ENCODE measurements at regions of chr22 and their contacts with region 1.

Region 1: DNA sequence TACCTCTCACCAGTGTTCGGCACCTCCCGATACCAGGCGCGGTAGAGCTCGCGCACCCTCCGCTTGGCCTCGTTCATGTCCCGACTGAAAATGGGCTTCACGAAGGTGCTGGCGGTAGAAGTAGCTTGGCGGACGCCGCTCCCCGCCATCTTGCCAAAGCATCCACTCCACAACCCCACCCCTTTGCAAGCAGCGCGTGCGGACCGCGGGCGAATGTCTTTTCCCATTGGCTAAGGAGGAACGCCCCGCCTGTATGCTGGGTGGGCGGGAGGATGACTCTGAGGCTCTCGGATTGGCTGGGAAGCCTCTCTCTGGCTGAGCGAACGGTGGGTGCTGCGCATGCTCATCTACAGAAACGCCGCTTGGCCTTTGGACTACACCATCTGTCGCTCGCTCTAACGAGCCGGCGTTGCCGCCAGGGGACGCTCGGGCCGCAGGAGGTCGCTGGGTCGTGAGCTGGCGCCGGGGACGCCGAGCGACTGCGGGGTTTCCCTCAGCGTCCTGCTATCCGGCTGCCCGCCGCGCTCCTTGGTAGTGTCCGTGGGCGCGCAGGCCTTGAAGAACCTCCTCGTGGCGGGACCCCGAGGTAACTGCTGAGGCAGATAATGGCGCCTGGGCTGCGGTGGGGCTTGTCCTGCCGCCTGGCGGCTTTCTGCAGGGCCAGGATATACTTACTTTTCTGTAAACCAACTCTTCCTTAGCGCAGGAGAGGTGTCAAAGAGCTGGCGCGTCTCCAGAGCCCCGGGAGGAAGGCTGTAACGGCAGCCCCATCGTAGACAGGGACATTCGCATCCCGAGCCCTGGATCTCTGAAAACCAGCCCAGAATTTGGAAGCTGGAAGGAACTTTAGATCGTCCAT is at the start of gene NDUFA6:
- DNase-seq: peak; percentile 99
- H3K4me3 Mint-ChIP-seq: peak within 1 kb of the TSS; percentile 94
- H3K27ac Mint-ChIP-seq: peak within 1 kb of the TSS; percentile 100
- H3K4me1 Mint-ChIP-seq: peaks cover 27% of the 10 kb centered on the region
- H3K27me3 Mint-ChIP-seq: no peaks in the 10 kb centered on the region
- total RNA-seq, gene NDUFA6: 77.7 and 87.8 TPM in 2 replicates

Region 2: GRCh38 chr22:42079319-42080251 is 11.2 kb before region 1 on chr22 and contains the start of gene SMDT1:
- intact Hi-C with region 1: loop called (anchors 1 kb)
- DNase-seq: peak; percentile 99
- H3K4me3 Mint-ChIP-seq: peak within 1 kb of the TSS; percentile 92
- H3K27ac Mint-ChIP-seq: peak within 1 kb of the TSS; percentile 93
- H3K4me1 Mint-ChIP-seq: peaks cover 28% of the 10 kb centered on the region
- H3K27me3 Mint-ChIP-seq: no peaks in the 10 kb centered on the region
- total RNA-seq, gene SMDT1: 54.4 and 58.7 TPM in 2 replicates

Region 3: DNA sequence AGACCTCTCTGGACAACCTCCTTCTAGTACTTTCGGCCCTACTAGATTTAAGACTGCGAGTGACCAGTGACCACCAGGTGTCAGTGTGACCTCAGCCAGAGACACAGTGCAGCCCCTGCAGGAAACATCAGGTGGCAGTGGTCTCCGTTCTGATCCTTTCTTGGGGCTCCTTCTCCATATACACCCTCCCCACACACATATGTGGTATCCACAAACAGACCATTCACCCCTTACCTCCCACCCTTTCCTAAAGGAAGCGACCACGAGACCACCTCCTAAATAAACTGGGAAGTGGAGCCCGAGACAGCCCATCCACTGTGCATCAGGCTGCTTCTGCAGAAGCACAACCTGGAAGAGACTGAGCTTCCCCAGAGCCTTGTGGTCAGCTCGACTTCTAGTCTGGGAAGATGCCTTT is 78.2 kb after region 1 on chr22:
- intact Hi-C with region 1: loop called (anchors 5 kb)
- DNase-seq: peak; percentile 89
- H3K4me3 Mint-ChIP-seq: no peak overlapping the region
- H3K27ac Mint-ChIP-seq: peak overlapping the region; percentile 29
- H3K4me1 Mint-ChIP-seq: peaks cover 10% of the 10 kb centered on the region
- H3K27me3 Mint-ChIP-seq: no peaks in the 10 kb centered on the region

Region 4: GRCh38 chr22:42313804-42314581 is 223.2 kb after region 1 on chr22:
- intact Hi-C with region 1: loop called (anchors 5 kb)
- DNase-seq: peak; percentile 84
- H3K4me3 Mint-ChIP-seq: no peak overlapping the region
- H3K27ac Mint-ChIP-seq: no peak overlapping the region
- H3K4me1 Mint-ChIP-seq: peaks cover 18% of the 10 kb centered on the region
- H3K27me3 Mint-ChIP-seq: no peaks in the 10 kb centered on the region

Region 5: DNA sequence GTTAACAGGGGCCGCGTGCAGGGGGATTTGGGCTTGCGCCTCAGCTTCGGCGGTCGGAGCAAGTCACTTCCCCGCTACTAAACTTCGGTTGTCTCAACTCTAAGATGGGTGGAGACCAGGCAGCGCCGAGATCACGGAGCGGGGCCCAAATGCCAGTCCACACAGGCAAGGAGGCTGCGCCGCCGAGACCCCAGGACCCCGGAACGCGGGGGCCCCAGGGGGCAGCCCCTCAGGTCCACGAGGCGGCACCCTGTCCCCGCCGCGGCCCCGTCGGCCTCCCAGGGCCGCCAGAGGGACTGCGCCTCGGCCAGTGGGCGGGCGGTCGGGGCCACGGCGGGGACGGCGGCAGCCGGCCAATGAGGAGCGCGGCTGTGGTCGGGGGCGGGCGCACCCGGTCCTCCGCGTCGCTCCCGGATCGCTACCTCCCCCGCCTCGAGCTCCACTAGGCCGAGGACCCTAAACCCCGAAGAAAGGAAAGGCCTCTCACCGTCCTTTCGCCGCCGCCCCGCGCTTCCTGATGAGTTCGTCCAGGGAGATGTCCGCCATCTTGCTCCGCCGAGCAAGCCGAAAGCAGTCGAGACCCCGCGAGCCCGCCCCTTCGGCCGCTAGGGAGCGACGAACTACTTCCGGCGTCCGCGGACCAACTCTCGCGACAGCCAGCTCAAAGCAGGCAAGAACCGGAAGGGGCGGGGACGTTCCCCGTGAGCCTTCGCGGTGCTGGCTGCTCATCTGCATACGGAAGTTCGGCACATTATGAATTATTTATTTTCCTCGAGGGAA is 523.7 kb after region 1 on chr22 and contains the start of gene POLDIP3:
- intact Hi-C with region 1: loop called (anchors 5 kb)
- DNase-seq: peak; percentile 99
- H3K4me3 Mint-ChIP-seq: peak within 1 kb of the TSS; percentile 91
- H3K27ac Mint-ChIP-seq: peak within 1 kb of the TSS; percentile 99
- H3K4me1 Mint-ChIP-seq: peaks cover 47% of the 10 kb centered on the region
- H3K27me3 Mint-ChIP-seq: no peaks in the 10 kb centered on the region
- total RNA-seq, gene POLDIP3: 75.4 and 85.3 TPM in 2 replicates

Measured in activated CD4-positive, alpha-beta T cell treated with anti-CD3 and anti-CD28 coated beads, Interleukin-2, amount 10 ng/mL, durations not matched to agents 24 days and 14 days (primary cell).